Left cardiac atrium (tissue), 4 donors: ENCODE measurements at regions of chr12 and their contacts with region 1.

Region 1: GRCh38 chr12:25352083-25352918 is 101.6 kb upstream of the KRAS start:
- DNase-seq: no peak
- ATAC-seq: no peak

Region 2: DNA sequence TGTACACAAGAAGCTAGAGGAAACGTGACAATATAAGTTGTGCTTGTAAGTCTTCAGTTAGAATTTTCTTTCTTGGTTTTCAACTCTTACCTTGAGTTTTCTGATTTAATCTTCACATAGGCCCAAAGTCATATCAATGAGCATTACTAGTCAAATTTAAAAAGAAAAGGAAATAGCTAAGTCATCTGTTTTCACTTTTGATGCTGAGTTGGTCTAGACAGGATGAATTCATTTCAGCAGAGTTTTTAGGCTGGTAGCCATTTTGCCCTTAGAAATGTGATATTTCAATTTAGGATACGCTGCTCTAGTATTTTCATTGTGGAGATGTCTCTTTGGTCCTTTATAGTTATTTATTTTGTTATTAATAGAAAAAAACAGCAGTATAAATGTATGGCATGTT is 56.9 kb before region 1 on chr12:
- intact Hi-C with region 1: loop called in 1 of 2 experiments (anchors 10 kb)
- DNase-seq: no peak
- ATAC-seq: no peak

Region 3: GRCh38 chr12:25332143-25332542 is 20.2 kb before region 1 on chr12:
- intact Hi-C with region 1: no loop called
- DNase-seq: no peak
- ATAC-seq: no peak

Region 4: DNA sequence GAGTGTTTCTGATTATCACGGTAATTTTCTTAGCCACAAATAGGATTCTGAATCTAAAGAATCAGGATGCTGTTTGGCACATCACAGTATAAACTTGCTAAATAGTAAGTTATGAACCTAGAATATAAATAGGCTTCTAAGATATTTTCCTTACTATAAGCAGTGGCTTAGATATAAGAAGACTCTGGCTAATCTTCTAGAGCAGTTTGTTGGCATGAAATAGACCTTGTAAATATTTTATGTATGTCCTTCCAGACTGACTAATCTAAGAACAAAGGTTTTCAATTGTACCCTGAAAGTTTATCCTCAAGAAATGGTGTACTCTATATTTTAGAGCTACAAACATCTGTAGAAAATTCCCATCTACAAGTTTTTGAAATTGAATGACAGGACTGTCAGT is 152.4 kb after region 1 on chr12:
- intact Hi-C with region 1: no loop called
- DNase-seq: no peak
- ATAC-seq: no peak